CD4-positive, alpha-beta memory T cell (primary cell): ENCODE measurements at regions of chr1 and their contacts with region 1.

Region 1: DNA sequence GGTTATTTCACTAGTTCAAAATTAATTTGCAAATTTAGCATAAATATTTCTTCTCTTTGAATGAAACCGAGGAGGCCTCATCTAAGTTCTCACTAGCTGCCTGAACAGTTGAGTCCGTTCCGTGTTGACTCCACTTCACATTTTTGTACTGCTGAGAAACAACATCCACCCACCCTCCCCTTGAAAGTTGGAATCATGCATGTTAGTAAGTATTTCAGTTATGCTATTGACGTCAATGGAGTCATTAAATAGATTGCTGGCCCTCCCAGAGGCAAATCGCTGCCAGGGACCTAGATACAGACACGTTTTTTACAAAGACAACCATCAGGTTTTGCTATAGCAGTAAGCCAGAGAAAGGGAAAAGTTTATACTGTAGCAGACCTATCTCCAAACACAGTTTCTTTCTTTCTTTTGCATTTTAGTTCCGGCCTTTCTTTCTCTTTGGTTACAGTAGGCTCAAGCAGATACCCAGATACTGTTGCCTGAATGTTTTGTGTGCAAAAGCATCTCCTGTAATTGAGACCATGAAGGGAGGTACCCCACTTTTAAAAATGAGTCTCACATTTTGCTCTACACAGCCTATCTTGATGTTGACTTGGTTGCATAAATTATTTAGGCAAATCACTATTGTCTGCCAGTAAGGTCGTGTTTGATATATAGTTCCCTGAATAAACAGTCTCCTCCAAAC is 262.6 kb upstream of the SGIP1 start:
- DNase-seq: peak; percentile 43 to 69 (median 54)
- H3K4me3 ChIP-seq: no peak overlapping the region
- H3K4me3 Mint-ChIP-seq: peak overlapping the region; percentile 2 to 74 (median 48)
- H3K27ac ChIP-seq: peak overlapping the region; percentile 18
- H3K27ac Mint-ChIP-seq: peak overlapping the region; percentile 33 to 93 (median 89)
- H3K4me1 ChIP-seq: peaks cover 55% of the 10 kb centered on the region
- H3K4me1 Mint-ChIP-seq: peaks cover 43 to 54% (median 51%) of the 10 kb centered on the region in 4 donors
- H3K27me3 ChIP-seq: no peaks in the 10 kb centered on the region
- H3K27me3 Mint-ChIP-seq: no peaks in the 10 kb centered on the region

Region 2: GRCh38 chr1:66258404-66259105 is 12.8 kb before region 1 on chr1:
- CTCF ChIA-PET with region 1: interaction called, 34 read pairs
- POLR2A ChIA-PET with region 1: interaction called, 8 read pairs
- intact Hi-C with region 1: loop called (anchors 2 kb)
- DNase-seq: no peak
- H3K4me3 ChIP-seq: no peak overlapping the region
- H3K4me3 Mint-ChIP-seq: no peak overlapping the region
- H3K27ac ChIP-seq: no peak overlapping the region
- H3K27ac Mint-ChIP-seq: no peak overlapping the region
- H3K4me1 ChIP-seq: peaks cover 14% of the 10 kb centered on the region
- H3K4me1 Mint-ChIP-seq: peaks cover 19 to 50% (median 30%) of the 10 kb centered on the region in 4 donors
- H3K27me3 ChIP-seq: no peaks in the 10 kb centered on the region
- H3K27me3 Mint-ChIP-seq: no peaks in the 10 kb centered on the region

Region 3: DNA sequence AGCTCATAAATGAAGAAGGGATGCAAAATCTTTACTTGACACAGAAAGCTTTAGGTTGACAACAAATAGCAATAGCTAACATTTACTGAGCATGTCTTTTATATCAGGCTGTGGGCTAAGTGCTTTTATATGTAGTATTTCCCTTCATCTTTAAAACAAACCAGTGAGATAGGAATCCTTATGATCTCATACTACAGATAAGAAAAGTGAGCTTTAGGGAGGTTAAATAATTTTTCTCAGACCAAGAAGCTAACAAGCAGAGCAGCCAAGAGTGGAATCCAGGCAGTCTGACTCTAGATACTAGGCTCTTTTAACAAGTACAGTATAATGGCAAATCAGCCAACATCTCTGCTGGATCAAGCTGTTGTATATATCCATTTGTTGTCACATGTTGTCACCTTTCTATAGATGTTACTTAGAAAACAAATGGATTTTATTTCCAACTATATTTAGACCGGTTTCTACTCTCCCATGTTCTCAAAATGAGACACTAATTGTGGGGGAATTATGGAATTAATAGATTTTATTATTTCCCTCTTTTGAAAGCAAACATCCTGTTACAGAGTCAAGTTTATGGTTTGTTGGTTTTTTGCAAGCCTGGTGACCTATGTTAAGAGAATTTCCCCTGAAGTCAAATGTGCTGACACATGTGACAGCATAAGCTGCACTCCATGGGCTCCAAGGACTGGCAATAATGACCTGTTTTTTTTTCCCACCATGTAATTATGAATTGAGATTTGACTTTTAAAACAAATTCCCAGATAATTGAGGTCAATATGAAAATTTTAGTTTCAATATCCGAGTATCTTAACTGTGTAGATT is 19.9 kb after region 1 on chr1:
- CTCF ChIA-PET with region 1: interaction called, 3 read pairs
- POLR2A ChIA-PET with region 1: interaction called, 10 read pairs
- intact Hi-C with region 1: no loop called
- DNase-seq: no peak
- H3K4me3 ChIP-seq: no peak overlapping the region
- H3K4me3 Mint-ChIP-seq: no peak overlapping the region
- H3K27ac ChIP-seq: no peak overlapping the region
- H3K27ac Mint-ChIP-seq: peak overlapping the region in 2 of 7 donors; percentile 24 to 45
- H3K4me1 ChIP-seq: peaks cover 13% of the 10 kb centered on the region
- H3K4me1 Mint-ChIP-seq: peaks cover 25 to 40% (median 30%) of the 10 kb centered on the region in 4 donors
- H3K27me3 ChIP-seq: no peaks in the 10 kb centered on the region
- H3K27me3 Mint-ChIP-seq: no peaks in the 10 kb centered on the region

Region 4: GRCh38 chr1:66339944-66340343 is 68.6 kb after region 1 on chr1:
- CTCF ChIA-PET with region 1: interaction called, 5 read pairs
- POLR2A ChIA-PET with region 1: interaction called, 121 read pairs
- intact Hi-C with region 1: no loop called
- DNase-seq: no peak
- H3K4me3 ChIP-seq: peak overlapping the region in 1 of 2 donors; percentile 11
- H3K4me3 Mint-ChIP-seq: peak overlapping the region; percentile 52 to 84 (median 67)
- H3K27ac ChIP-seq: peak overlapping the region; percentile 49
- H3K27ac Mint-ChIP-seq: peak overlapping the region; percentile 61 to 94 (median 80)
- H3K4me1 ChIP-seq: peaks cover 88% of the 10 kb centered on the region
- H3K4me1 Mint-ChIP-seq: peaks cover 46 to 86% (median 68%) of the 10 kb centered on the region in 4 donors
- H3K27me3 ChIP-seq: no peaks in the 10 kb centered on the region
- H3K27me3 Mint-ChIP-seq: no peaks in the 10 kb centered on the region

Region 5: DNA sequence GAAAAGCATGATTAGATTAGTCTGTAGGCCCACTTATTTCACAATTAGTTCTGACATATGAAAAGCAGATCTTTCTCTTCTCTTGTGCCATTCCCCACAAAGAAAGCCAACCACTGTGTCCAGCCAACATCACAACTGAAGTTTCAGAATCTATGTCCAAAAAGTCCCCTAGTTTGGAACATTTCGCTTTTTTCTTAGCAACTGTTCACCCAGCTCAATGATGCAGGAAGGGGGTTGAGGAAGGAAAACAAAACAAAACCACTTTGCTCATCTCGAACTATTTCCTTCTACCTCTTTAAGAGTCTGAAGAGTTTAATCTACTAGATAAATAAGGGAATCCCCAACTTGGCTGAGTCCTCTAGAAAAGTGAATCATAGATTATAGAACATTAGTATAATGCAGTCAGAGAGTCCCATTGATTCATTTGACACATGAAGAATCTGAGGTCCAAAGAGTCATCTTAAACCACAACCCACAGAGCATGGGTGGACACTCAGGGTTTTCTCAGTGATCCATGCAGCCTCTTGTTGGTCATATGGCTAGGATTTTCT is 103.3 kb after region 1 on chr1:
- CTCF ChIA-PET with region 1: no interaction called
- POLR2A ChIA-PET with region 1: interaction called, 10 read pairs
- intact Hi-C with region 1: no loop called
- DNase-seq: peak; percentile 51 to 66 (median 54)
- H3K4me3 ChIP-seq: no peak overlapping the region
- H3K4me3 Mint-ChIP-seq: peak overlapping the region; percentile 47 to 86 (median 68)
- H3K27ac ChIP-seq: peak overlapping the region; percentile 58
- H3K27ac Mint-ChIP-seq: peak overlapping the region; percentile 81 to 99 (median 93)
- H3K4me1 ChIP-seq: peaks cover 69% of the 10 kb centered on the region
- H3K4me1 Mint-ChIP-seq: peaks cover 58 to 72% (median 65%) of the 10 kb centered on the region in 4 donors
- H3K27me3 ChIP-seq: no peaks in the 10 kb centered on the region
- H3K27me3 Mint-ChIP-seq: no peaks in the 10 kb centered on the region

Region 6: GRCh38 chr1:66663730-66664129 is 392.4 kb after region 1 on chr1:
- CTCF ChIA-PET with region 1: no interaction called
- POLR2A ChIA-PET with region 1: no interaction called
- intact Hi-C with region 1: no loop called
- DNase-seq: no peak
- H3K4me3 ChIP-seq: no peak overlapping the region
- H3K4me3 Mint-ChIP-seq: no peak overlapping the region
- H3K27ac ChIP-seq: no peak overlapping the region
- H3K27ac Mint-ChIP-seq: no peak overlapping the region
- H3K4me1 ChIP-seq: no peaks in the 10 kb centered on the region
- H3K4me1 Mint-ChIP-seq: peaks cover 0 to 1% (median 0%) of the 10 kb centered on the region in 4 donors
- H3K27me3 ChIP-seq: no peaks in the 10 kb centered on the region
- H3K27me3 Mint-ChIP-seq: peaks cover 1 to 12% of the 10 kb centered on the region in 2 donors